Sigmoid colon (tissue), 7 donors: ENCODE measurements at regions of chr7 and their contacts with region 1.

Region 1: GRCh38 chr7:94395141-94396036 is 694 bp downstream of the COL1A2 start:
- DNase-seq: peak; percentile 88
- H3K4me3 ChIP-seq: peak overlapping the region; percentile 52 to 72 (median 61)
- H3K27ac ChIP-seq: peak overlapping the region; percentile 89 to 94 (median 92)
- H3K4me1 ChIP-seq: peaks cover 0 to 66% (median 54%) of the 10 kb centered on the region in 4 donors
- H3K27me3 ChIP-seq: no peaks in the 10 kb centered on the region
- CTCF ChIP-seq: peak; percentile 80 to 96 (median 88)
- EP300 ChIP-seq: no peak
- POLR2A ChIP-seq: peak in 1 of 2 donors; percentile 6

Region 2: DNA sequence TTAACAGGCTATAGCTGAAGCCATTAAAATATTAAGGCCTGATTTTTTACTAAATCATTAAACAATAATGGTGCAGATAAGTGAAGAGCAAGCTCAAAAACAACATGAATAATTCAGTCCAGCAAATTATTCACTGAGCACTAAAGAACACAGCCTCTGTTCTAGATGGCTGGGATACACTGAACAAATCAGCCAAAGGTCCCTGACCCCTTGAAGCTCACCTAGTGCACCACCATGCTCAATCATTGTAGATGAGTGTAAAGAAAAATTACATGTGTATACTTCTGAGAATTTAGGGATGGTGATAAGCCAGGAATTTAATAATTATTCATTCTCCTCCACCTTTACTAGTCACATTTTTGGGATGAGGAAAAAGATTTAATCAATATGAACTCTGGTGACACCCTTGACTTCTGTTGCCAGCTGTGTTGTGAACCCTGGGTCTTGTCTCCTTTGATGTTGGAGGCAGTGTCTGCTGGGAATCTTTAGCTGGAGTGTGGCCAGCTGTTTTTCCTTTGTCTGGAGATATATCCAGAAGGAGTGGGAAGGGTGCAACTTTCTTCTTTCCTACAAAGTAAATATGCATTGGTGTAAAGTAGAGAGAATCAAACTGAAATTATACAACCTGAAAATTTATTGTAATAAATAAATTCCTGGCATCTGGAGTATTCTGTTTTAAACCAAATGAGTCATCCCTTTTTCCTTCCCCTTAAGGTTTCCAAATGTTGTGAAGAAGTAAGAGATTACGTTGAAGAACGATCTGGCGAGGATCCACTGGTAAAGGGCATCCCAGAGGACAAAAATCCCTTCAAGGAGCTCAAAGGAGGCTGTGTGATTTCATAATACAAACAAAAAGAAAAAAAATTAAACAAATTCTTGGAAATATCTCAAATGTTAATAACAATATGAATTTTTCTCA is 485.1 kb before region 1 on chr7:
- intact Hi-C with region 1: loop called (anchors 10 kb)
- DNase-seq: peak; percentile 85
- H3K4me3 ChIP-seq: no peak overlapping the region
- H3K27ac ChIP-seq: peak overlapping the region; percentile 56 to 70 (median 60)
- H3K4me1 ChIP-seq: peaks cover 0 to 24% (median 19%) of the 10 kb centered on the region in 4 donors
- H3K27me3 ChIP-seq: no peaks in the 10 kb centered on the region
- CTCF ChIP-seq: no peak
- EP300 ChIP-seq: no peak
- POLR2A ChIP-seq: no peak

Region 3: GRCh38 chr7:94295850-94296249 is 99.5 kb before region 1 on chr7:
- intact Hi-C with region 1: loop called (anchors 1 kb)
- DNase-seq: no peak
- H3K4me3 ChIP-seq: peak overlapping the region in 3 of 4 donors; percentile 22 to 40 (median 32)
- H3K27ac ChIP-seq: peak overlapping the region; percentile 78 to 93 (median 88)
- H3K4me1 ChIP-seq: peaks cover 0 to 54% (median 32%) of the 10 kb centered on the region in 4 donors
- H3K27me3 ChIP-seq: no peaks in the 10 kb centered on the region
- CTCF ChIP-seq: peak; percentile 56 to 82 (median 68)
- EP300 ChIP-seq: peak in 1 of 4 donors; percentile 15
- POLR2A ChIP-seq: no peak

Region 4: GRCh38 chr7:94374231-94374630 is 21.2 kb before region 1 on chr7:
- intact Hi-C with region 1: loop called (anchors 1 kb)
- DNase-seq: peak; percentile 94
- H3K4me3 ChIP-seq: peak overlapping the region in 3 of 4 donors; percentile 24 to 35 (median 29)
- H3K27ac ChIP-seq: peak overlapping the region; percentile 86 to 95 (median 86)
- H3K4me1 ChIP-seq: peaks cover 0 to 60% (median 39%) of the 10 kb centered on the region in 4 donors
- H3K27me3 ChIP-seq: no peaks in the 10 kb centered on the region
- CTCF ChIP-seq: no peak
- EP300 ChIP-seq: no peak
- POLR2A ChIP-seq: peak; percentile 75 to 86

Region 5: DNA sequence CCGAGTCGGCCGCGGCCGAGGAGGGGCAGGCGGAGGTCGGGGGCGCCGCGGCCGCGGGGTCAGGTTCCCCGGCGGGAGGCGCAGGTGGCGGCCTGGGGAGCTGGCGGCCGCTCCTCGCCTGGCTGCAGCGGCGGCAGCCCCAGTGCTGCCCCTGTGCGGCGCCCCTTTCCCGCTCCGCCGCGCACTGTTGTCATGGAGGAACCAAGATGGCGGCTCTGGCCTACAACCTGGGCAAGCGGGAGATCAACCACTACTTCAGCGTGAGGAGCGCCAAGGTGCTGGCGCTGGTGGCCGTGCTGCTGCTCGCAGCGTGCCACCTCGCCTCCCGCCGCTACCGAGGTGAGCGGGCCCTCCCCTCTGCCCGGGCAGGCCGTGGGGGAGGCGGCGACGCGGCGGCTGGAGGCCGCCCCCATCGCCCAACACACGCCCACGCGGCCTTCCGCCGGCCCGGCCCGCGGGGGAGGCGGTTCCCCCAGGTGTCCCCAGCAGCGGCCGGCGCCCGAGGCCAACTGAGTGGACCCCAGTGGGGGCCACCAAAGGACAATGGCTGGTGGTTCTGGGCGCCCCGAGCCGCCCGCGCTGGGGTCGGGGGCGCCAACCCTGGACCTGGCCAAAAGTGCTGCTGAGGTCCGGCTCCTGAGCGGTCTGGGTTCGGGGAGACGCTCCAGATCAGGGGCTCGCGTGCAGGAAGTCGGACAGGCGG is 114.6 kb after region 1 on chr7:
- intact Hi-C with region 1: no loop called
- DNase-seq: peak; percentile 77
- H3K4me3 ChIP-seq: peak overlapping the region; percentile 75 to 96 (median 82)
- H3K27ac ChIP-seq: peak overlapping the region; percentile 89 to 93 (median 91)
- H3K4me1 ChIP-seq: peaks cover 0 to 38% (median 21%) of the 10 kb centered on the region in 4 donors
- H3K27me3 ChIP-seq: no peaks in the 10 kb centered on the region
- CTCF ChIP-seq: no peak
- EP300 ChIP-seq: no peak
- POLR2A ChIP-seq: peak in 1 of 2 donors; percentile 18